ENCODE measurements at regions of chr12 and their contacts with region 1.

Region 1: GRCh38 chr12:113422030-113422885 is at the start of gene SDSL:
- DNase-seq: peak; percentile 21
- H3K4me3 ChIP-seq: peak within 1 kb of the TSS; percentile 75
- CTCF ChIP-seq: no peak

Region 2: GRCh38 chr12:112823582-112824149 is 598.6 kb before region 1 on chr12:
- CTCF ChIA-PET with region 1: no interaction called
- POLR2A ChIA-PET with region 1: no interaction called
- DNase-seq: no peak
- H3K4me3 ChIP-seq: no peak overlapping the region
- CTCF ChIP-seq: no peak

Region 3: DNA sequence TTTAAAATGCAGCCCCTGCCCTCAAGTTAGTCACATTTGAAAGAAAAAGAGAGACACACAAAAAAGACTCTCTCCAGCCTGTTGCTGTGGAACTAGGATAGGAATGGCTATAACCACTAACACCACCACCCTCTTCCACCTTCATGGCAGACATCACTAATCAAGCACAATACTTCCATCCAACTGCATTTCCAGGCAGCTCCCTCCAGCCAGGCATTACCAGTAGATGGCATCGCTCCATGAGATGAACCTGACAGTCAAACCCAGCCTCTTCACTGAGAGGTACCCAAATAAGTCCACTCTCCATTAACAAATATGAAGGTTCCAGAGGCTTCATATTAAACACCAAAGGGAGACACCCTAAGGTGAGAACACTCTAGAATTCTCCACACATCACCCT is 111.8 kb before region 1 on chr12:
- CTCF ChIA-PET with region 1: interaction called, 70 read pairs
- POLR2A ChIA-PET with region 1: no interaction called
- DNase-seq: no peak
- H3K4me3 ChIP-seq: no peak overlapping the region
- CTCF ChIP-seq: no peak

Region 4: GRCh38 chr12:113366827-113367226 is 55.4 kb before region 1 on chr12:
- CTCF ChIA-PET with region 1: interaction called, 10 read pairs
- POLR2A ChIA-PET with region 1: interaction called, 3 read pairs
- DNase-seq: no peak
- H3K4me3 ChIP-seq: no peak overlapping the region
- CTCF ChIP-seq: no peak

Region 5: DNA sequence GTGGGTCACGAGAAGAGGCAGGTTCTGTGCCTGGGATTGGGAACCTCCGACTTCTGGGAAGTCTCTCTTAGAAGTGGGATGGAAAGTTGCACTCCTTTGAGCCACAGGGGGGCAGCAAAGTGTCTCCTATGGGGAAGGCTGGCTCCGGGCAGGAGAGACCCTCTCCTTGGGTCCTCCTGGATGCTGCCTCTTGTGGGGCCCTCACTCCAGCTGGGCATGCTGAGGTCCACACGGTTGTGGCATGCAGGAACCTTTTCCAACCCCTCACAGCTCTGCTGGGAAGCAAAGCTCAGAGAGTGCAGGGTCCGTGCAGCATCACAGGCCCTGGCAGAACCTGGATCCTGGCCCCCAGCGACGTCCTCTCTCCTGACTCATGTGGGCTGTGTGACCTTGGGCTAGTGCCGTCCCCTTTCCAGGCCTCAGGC is 17.4 kb after region 1 on chr12:
- CTCF ChIA-PET with region 1: interaction called, 16 read pairs
- POLR2A ChIA-PET with region 1: no interaction called
- DNase-seq: no peak
- H3K4me3 ChIP-seq: no peak overlapping the region
- CTCF ChIP-seq: peak; percentile 76

Measured in AG04449 (cell line).